Endothelial cell of umbilical vein (primary cell): ENCODE measurements at regions of chr11 and their contacts with region 1.

Region 1: GRCh38 chr11:13261591-13262061 is 16.0 kb upstream of the BMAL1 start:
- DNase-seq: peak; percentile 68
- H3K4me3 ChIP-seq: peak overlapping the region in 1 of 3 experiments; percentile 13
- H3K27ac ChIP-seq: peak overlapping the region; percentile 82
- H3K4me1 ChIP-seq: peaks cover 35% of the 10 kb centered on the region
- H3K27me3 ChIP-seq: no peaks in the 10 kb centered on the region
- CTCF ChIP-seq: no peak
- POLR2A ChIP-seq: peak; percentile 24

Region 2: GRCh38 chr11:13105237-13105844 is 156.3 kb before region 1 on chr11:
- CTCF ChIA-PET with region 1: no interaction called
- POLR2A ChIA-PET with region 1: no interaction called
- dilution Hi-C with region 1: no loop called
- intact Hi-C with region 1: loop called (anchors 5 kb)
- DNase-seq: peak; percentile 99
- H3K4me3 ChIP-seq: peak overlapping the region in 1 of 3 experiments; percentile 0
- H3K27ac ChIP-seq: peak overlapping the region; percentile 60
- H3K4me1 ChIP-seq: peaks cover 39% of the 10 kb centered on the region
- H3K27me3 ChIP-seq: no peaks in the 10 kb centered on the region
- CTCF ChIP-seq: no peak
- POLR2A ChIP-seq: peak; percentile 70

Region 3: GRCh38 chr11:13216019-13216710 is 45.5 kb before region 1 on chr11:
- CTCF ChIA-PET with region 1: interaction called, 11 read pairs
- POLR2A ChIA-PET with region 1: no interaction called
- dilution Hi-C with region 1: no loop called
- intact Hi-C with region 1: loop called (anchors 1 kb)
- DNase-seq: peak; percentile 66
- H3K4me3 ChIP-seq: peak overlapping the region in 1 of 3 experiments; percentile 17
- H3K27ac ChIP-seq: peak overlapping the region; percentile 99
- H3K4me1 ChIP-seq: peaks cover 20% of the 10 kb centered on the region
- H3K27me3 ChIP-seq: no peaks in the 10 kb centered on the region
- CTCF ChIP-seq: no peak
- POLR2A ChIP-seq: peak; percentile 53

Region 4: GRCh38 chr11:13238879-13239514 is 22.6 kb before region 1 on chr11:
- CTCF ChIA-PET with region 1: interaction called, 12 read pairs
- POLR2A ChIA-PET with region 1: no interaction called
- dilution Hi-C with region 1: no loop called
- intact Hi-C with region 1: no loop called
- DNase-seq: peak; percentile 38
- H3K4me3 ChIP-seq: no peak overlapping the region
- H3K27ac ChIP-seq: no peak overlapping the region
- H3K4me1 ChIP-seq: no peaks in the 10 kb centered on the region
- H3K27me3 ChIP-seq: peaks cover 11 to 20% of the 10 kb centered on the region in 2 experiments
- CTCF ChIP-seq: peak; percentile 74 to 81
- POLR2A ChIP-seq: no peak

Region 5: DNA sequence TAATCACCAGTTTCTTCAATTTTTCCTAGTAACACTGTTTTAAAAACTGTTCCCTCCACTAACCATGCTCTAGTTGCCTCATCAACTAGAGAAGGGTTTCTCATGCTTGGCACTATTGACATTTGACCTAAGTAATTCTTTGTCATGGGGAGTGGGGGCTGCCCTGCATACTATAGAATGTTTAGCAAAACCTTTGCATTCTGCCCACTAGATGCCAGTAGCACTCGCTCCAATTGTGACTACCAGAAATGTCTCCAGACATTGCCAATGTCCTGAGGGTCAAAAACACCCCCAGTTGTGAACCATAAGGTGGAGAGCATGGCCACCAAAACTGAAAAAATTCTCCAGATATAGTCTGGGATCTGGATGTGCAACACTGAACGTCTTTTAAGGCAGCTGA is 11.6 kb before region 1 on chr11:
- CTCF ChIA-PET with region 1: interaction called, 20 read pairs
- POLR2A ChIA-PET with region 1: no interaction called
- dilution Hi-C with region 1: no loop called
- intact Hi-C with region 1: no loop called
- DNase-seq: peak; percentile 3
- H3K4me3 ChIP-seq: no peak overlapping the region
- H3K27ac ChIP-seq: no peak overlapping the region
- H3K4me1 ChIP-seq: no peaks in the 10 kb centered on the region
- H3K27me3 ChIP-seq: peaks cover 24 to 25% of the 10 kb centered on the region in 2 experiments
- CTCF ChIP-seq: no peak
- POLR2A ChIP-seq: no peak

Region 6: GRCh38 chr11:13276832-13277767 is 15.5 kb after region 1 on chr11:
- CTCF ChIA-PET with region 1: interaction called, 4 read pairs
- POLR2A ChIA-PET with region 1: no interaction called
- dilution Hi-C with region 1: no loop called
- intact Hi-C with region 1: loop called (anchors 1 kb)
- DNase-seq: peak; percentile 98
- H3K4me3 ChIP-seq: peak overlapping the region; percentile 60 to 88 (median 81)
- H3K27ac ChIP-seq: no peak overlapping the region
- H3K4me1 ChIP-seq: peaks cover 13% of the 10 kb centered on the region
- H3K27me3 ChIP-seq: peaks cover 52 to 64% of the 10 kb centered on the region in 2 experiments
- CTCF ChIP-seq: no peak
- POLR2A ChIP-seq: no peak

Region 7: DNA sequence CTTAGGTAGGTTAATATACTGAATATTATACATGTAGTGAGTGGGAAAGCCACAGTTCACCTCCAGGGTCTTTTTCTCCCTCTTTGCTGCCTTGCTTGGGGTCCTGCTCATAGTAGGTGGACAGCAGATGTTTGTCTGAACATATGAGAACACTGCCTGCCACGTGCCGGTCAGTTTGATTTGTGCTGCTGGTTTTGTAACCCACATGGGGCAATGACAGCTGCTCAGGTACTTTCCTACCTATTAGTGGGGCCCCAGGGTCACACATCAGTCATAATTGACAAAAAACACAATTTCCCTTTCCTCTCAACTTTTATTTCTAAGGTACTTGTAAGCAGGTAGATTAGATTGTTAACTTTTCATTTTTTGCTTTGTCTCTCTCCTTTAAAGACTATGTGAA is 59.8 kb after region 1 on chr11:
- CTCF ChIA-PET with region 1: no interaction called
- POLR2A ChIA-PET with region 1: no interaction called
- dilution Hi-C with region 1: no loop called
- intact Hi-C with region 1: no loop called
- DNase-seq: no peak
- H3K4me3 ChIP-seq: no peak overlapping the region
- H3K27ac ChIP-seq: no peak overlapping the region
- H3K4me1 ChIP-seq: no peaks in the 10 kb centered on the region
- H3K27me3 ChIP-seq: no peaks in the 10 kb centered on the region
- CTCF ChIP-seq: no peak
- POLR2A ChIP-seq: no peak

Region 8: GRCh38 chr11:13335319-13335718 is 73.7 kb after region 1 on chr11:
- CTCF ChIA-PET with region 1: interaction called, 15 read pairs
- POLR2A ChIA-PET with region 1: no interaction called
- dilution Hi-C with region 1: no loop called
- intact Hi-C with region 1: loop called (anchors 1 kb)
- DNase-seq: peak; percentile 61
- H3K4me3 ChIP-seq: no peak overlapping the region
- H3K27ac ChIP-seq: no peak overlapping the region
- H3K4me1 ChIP-seq: peaks cover 27% of the 10 kb centered on the region
- H3K27me3 ChIP-seq: no peaks in the 10 kb centered on the region
- CTCF ChIP-seq: peak; percentile 82 to 91
- POLR2A ChIP-seq: no peak